ENCODE measurements at regions of chr17 and their contacts with region 1.

Region 1: DNA sequence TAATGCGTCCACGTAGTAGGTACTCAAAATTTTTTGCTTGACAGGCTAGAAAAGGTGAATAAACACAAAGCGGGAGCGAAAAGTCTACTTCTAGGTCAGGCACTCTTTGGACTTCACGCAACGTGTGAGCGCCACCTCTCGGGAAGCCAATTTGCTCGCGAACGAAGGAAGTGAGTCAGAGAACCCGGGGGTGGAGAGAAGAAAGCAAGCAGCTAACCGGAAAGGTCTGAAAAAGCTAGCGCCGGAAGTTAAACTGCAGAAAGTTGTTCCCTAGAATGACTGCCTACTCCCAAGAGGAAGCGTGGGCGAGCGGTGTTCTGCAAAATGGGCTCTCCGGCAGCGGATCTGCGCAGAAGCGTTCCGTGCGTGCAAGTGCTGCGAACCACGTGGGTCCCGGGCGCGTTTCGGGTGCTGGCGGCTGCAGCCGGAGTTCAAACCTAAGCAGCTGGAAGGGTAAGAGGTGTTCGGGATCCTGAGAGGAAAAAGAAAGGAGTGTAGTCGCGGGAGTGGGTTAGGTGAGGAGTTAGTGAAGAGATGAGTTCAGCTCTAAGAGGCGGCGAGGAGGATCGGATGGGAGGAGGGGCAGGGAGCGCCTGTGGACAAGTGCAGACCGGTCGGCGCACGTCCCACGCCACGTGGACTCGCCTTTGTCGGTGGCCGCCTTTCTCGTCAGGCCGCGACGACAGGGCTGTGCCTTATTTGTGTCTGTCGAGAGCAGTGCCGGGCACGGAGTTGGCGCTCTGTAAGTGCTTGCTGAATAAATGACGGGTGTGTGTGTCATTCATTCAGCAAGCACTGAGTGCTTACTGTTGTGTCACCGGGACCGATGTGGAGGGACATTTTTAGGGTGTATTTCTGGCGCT is at the start of gene NME1:
- DNase-seq: peak; percentile 94 to 99 (median 98)

Region 2: DNA sequence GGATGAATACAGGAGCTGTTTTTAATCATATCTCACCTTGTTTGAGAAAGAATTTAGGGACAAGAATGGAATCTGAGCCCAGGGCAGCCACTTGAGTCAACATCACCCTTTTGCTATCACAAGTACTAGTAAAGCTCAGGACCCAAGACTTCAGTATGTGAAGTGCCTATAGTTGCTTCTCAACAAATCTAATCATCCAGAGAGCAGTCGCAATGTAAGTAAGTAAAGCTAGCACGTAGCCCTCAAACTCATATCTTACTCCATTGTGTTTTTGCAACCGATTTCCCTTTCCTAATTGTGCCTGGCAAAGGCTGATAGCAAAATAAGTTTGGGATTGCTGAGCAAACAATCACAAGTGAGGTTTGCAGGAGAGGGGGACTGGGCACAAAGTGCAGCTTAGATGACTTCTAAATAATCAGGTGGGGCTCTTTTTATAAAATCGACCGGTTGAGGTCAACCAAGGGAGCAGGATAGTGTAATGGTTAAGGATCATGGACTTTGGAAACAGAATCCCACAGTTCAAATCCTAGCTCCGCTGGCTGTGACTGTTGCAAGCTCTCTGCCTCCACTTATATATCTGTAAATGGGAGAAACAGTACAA is 300.3 kb before region 1 on chr17:
- intact Hi-C with region 1: loop called (anchors 10 kb)
- DNase-seq: peak in 1 of 42 donors; percentile 22

Region 3: GRCh38 chr17:51000835-51001638 is 152.4 kb before region 1 on chr17:
- intact Hi-C with region 1: loop called (anchors 2 kb)
- DNase-seq: peak in 9 of 42 donors; percentile 32 to 79 (median 58)

Region 4: GRCh38 chr17:51056813-51057510 is 96.5 kb before region 1 on chr17:
- intact Hi-C with region 1: loop called (anchors 10 kb)
- DNase-seq: peak in 27 of 42 donors; percentile 15 to 83 (median 53)

Region 5: GRCh38 chr17:51120739-51121617 is 32.5 kb before region 1 on chr17 and contains the start of gene SPAG9:
- intact Hi-C with region 1: loop called (anchors 2 kb)
- DNase-seq: peak; percentile 85 to 98 (median 95)